ENCODE measurements at regions of chr9 and their contacts with region 1.

Region 1: GRCh38 chr9:115591584-115591984 is 473.6 kb upstream of the TNC start:
- DNase-seq: peak; percentile 57
- H3K4me3 ChIP-seq: no peak overlapping the region
- H3K27ac ChIP-seq: peak overlapping the region; percentile 30 to 99; a peak in 3 of 4 replicates
- H3K4me1 ChIP-seq: peaks cover 17 to 36% of the 10 kb centered on the region in 2 experiments
- H3K27me3 ChIP-seq: no peaks in the 10 kb centered on the region
- CTCF ChIP-seq: peak; percentile 97
- EP300 ChIP-seq: peak; percentile 27 to 69; a peak in 2 of 4 replicates
- RAD21 ChIP-seq: peak; percentile 95

Region 2: DNA sequence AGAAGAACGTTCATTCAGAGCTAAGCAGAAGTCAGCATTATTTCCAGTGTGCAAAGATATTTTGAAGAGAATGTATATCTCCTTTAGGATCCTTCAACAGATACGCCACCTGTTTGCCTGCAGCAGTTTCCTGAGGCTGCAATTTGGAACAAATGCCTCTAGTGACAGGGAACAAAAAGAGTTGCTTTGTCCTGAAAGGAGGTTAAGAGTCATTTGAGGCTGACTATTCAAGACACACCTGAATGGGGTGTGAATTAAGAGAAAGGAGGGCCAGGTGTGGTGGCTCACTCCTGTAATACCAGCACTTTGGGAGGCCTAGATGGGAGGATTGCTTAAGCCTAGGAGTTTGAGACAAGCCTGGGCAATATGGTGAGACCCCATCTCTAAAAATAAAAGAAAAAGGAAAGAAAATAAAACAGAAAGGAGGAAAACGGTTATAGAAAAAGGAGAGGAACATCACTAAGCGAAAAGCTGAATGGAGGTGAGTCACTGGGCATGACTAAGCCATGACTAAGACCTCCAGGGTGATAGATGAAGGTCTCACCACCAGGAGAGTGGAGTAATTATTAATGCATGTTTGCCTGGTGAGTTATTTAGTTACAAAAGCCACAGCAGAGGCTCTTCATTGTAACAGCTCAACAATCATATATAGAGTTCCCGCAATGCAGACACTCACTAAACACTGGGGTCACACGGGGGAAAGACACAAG is 218.4 kb before region 1 on chr9:
- CTCF ChIA-PET with region 1: no interaction called
- POLR2A ChIA-PET with region 1: no interaction called
- DNase-seq: no peak
- H3K4me3 ChIP-seq: no peak overlapping the region
- H3K27ac ChIP-seq: peak overlapping the region; percentile 28 to 89; a peak in 3 of 4 replicates
- H3K4me1 ChIP-seq: peaks cover 16 to 30% of the 10 kb centered on the region in 2 experiments; a peak in 3 of 4 replicates
- H3K27me3 ChIP-seq: no peaks in the 10 kb centered on the region
- CTCF ChIP-seq: no peak
- EP300 ChIP-seq: peak in 1 of 2 experiments; percentile 97; a peak in 2 of 4 replicates
- RAD21 ChIP-seq: no peak

Region 3: GRCh38 chr9:115575147-115575546 is 16.4 kb before region 1 on chr9:
- CTCF ChIA-PET with region 1: interaction called, 15 read pairs
- POLR2A ChIA-PET with region 1: no interaction called
- DNase-seq: no peak
- H3K4me3 ChIP-seq: no peak overlapping the region
- H3K27ac ChIP-seq: no peak overlapping the region
- H3K4me1 ChIP-seq: no peaks in the 10 kb centered on the region
- H3K27me3 ChIP-seq: no peaks in the 10 kb centered on the region
- CTCF ChIP-seq: no peak
- EP300 ChIP-seq: no peak
- RAD21 ChIP-seq: no peak

Region 4: DNA sequence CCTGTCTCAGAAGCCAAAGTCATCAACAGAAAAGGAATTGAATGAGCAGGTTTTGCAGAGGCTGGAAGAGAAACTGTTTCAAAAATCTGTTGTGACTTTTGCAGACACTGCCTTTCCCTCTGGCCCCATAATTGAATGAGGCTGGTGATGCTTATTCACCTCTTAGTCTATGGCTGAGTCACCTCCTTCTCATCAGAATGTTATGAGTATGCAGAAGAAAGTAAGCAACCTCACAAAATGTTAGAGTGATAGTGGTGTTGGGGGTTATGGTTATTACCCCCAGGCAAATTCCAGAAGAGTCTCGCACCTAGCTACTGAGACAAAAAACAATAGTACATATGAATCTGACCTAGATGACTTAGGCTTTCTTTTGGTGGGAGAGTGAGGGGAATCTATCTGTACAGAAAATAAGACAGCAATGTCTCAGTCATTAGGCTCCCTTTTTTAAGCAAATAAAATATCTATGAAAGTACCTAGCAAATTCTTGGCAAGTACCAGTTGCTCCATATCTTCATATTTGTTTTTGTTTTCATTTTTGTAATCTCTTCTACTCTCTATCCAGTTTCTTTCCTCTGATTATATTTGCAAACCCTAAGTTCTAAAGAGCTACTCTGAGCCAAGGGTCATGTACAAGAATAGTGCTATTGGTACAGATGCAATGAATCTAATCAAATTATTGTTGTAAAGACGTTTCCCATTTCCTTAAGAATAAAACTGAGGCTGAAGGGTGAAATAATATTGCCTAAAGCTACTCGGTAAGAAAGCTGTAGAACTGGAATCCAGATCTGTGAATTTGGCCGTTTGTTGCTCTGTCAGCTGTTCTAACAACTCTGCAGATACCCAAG is 24.5 kb after region 1 on chr9:
- CTCF ChIA-PET with region 1: interaction called, 13 read pairs
- POLR2A ChIA-PET with region 1: no interaction called
- DNase-seq: peak; percentile 4
- H3K4me3 ChIP-seq: 0 out of 4 replicates have a peak overlapping the region, but pooled peaks of 1 of the 2 experiments have one; percentile 10
- H3K27ac ChIP-seq: peak overlapping the region; percentile 71 to 100; a peak in 3 of 4 replicates
- H3K4me1 ChIP-seq: peaks cover 0 to 31% of the 10 kb centered on the region in 2 experiments; a peak in 2 of 4 replicates
- H3K27me3 ChIP-seq: no peaks in the 10 kb centered on the region
- CTCF ChIP-seq: no peak
- EP300 ChIP-seq: peak; percentile 71 to 99
- RAD21 ChIP-seq: no peak

Region 5: GRCh38 chr9:116149844-116150243 is 558.3 kb after region 1 on chr9:
- CTCF ChIA-PET with region 1: interaction called, 35 read pairs
- POLR2A ChIA-PET with region 1: no interaction called
- DNase-seq: peak; percentile 53
- H3K4me3 ChIP-seq: no peak overlapping the region; a peak in 1 of 4 replicates
- H3K27ac ChIP-seq: peak overlapping the region in 1 of 2 experiments; percentile 99; a peak in 2 of 4 replicates
- H3K4me1 ChIP-seq: peaks cover 4 to 45% of the 10 kb centered on the region in 2 experiments; a peak in 3 of 4 replicates
- H3K27me3 ChIP-seq: no peaks in the 10 kb centered on the region
- CTCF ChIP-seq: peak; percentile 72
- EP300 ChIP-seq: no peak
- RAD21 ChIP-seq: peak; percentile 55

Region 6: DNA sequence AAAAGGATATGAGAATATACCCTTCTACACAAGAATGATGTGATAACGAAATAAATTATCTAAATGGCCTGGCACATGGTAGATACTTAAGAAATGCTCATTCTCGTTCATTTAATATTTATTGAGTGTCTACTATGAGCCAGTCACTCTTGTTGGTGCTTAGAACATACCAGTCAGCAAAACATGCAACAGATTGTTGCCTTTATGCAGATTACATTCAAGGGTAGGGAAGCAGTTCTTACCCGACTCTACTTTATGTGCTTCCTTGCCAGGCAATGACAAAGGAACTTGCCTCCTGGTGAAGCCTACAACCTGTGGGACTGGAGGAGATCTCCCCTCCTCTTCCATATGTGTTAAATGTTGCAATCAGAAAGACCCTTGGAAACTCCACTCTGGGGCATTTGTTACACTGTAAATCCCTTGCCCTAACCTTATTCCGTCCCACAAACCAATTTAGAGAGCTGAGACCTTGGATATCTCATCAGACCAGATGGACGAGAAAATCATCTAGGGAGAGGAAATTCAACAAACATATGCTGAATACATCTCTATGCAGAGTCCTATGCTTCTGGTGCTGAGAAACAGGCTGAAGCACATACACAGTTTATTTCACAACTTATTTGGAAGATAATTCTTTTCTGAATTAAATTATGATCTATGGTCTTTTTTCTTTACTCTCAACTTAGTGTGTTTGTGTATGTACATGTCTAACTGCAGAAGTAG is 967.4 kb after region 1 on chr9:
- CTCF ChIA-PET with region 1: interaction called, 10 read pairs
- POLR2A ChIA-PET with region 1: no interaction called
- DNase-seq: no peak
- H3K4me3 ChIP-seq: no peak overlapping the region
- H3K27ac ChIP-seq: no peak overlapping the region
- H3K4me1 ChIP-seq: no peaks in the 10 kb centered on the region; a peak in 1 of 4 replicates
- H3K27me3 ChIP-seq: no peaks in the 10 kb centered on the region
- CTCF ChIP-seq: no peak
- EP300 ChIP-seq: no peak
- RAD21 ChIP-seq: no peak

Region 7: DNA sequence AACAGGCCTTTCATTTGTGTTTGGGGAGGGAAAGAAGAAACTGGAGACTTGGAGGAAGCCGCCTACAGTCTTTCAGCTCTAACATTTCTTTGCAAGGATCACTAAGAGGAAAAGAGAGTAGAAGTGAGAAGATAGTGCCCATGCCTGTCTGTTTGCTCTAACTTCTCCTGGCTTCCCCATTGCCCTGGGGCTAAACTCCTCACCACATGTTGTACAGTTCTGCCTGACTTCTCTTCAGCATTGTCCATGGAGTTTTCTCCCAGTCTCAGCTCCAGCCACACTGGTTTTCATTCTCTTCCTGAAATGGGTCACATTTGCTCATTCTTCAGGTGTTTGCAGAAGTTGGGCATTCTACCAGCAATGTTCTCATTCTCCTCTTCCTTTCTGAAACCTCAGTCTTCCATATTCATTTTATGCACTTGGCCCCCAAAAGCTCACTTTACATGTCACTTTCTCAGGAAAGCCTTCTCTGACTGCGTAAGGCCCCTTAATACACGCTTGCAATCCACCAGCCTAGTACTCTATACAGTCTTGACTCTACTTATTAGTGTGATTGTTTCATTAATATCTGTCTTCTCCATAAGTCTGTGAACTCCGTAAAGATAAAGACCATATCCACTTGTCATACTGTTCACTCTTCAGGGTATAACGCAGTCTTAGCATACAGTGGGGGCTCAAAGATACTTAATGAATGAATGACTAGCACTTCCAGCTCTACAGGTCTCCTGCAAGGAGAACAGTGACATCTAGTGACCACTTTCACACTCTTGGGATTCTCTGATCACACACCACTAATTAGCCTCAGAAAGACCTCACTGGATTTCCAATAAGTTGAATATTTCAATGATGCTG is 1055.3 kb after region 1 on chr9:
- CTCF ChIA-PET with region 1: interaction called, 58 read pairs
- POLR2A ChIA-PET with region 1: no interaction called
- DNase-seq: peak; percentile 25
- H3K4me3 ChIP-seq: no peak overlapping the region
- H3K27ac ChIP-seq: no peak overlapping the region
- H3K4me1 ChIP-seq: peaks cover 0 to 9% of the 10 kb centered on the region in 2 experiments; a peak in 2 of 4 replicates
- H3K27me3 ChIP-seq: no peaks in the 10 kb centered on the region
- CTCF ChIP-seq: peak; percentile 73
- EP300 ChIP-seq: no peak
- RAD21 ChIP-seq: peak; percentile 88

Region 8: GRCh38 chr9:116860509-116861120 is 1269.0 kb after region 1 on chr9:
- CTCF ChIA-PET with region 1: interaction called, 10 read pairs
- POLR2A ChIA-PET with region 1: no interaction called
- DNase-seq: peak; percentile 64
- H3K4me3 ChIP-seq: no peak overlapping the region
- H3K27ac ChIP-seq: no peak overlapping the region
- H3K4me1 ChIP-seq: no peaks in the 10 kb centered on the region
- H3K27me3 ChIP-seq: no peaks in the 10 kb centered on the region
- CTCF ChIP-seq: peak; percentile 71
- EP300 ChIP-seq: no peak
- RAD21 ChIP-seq: peak; percentile 66

Measured in SK-N-SH (cell line).